Activated naive CD4-positive, alpha-beta T cell treated with anti-CD3 and anti-CD28 coated beads for 36 hours (primary cell): ENCODE measurements at regions of chr1 and their contacts with region 1.

Region 1: DNA sequence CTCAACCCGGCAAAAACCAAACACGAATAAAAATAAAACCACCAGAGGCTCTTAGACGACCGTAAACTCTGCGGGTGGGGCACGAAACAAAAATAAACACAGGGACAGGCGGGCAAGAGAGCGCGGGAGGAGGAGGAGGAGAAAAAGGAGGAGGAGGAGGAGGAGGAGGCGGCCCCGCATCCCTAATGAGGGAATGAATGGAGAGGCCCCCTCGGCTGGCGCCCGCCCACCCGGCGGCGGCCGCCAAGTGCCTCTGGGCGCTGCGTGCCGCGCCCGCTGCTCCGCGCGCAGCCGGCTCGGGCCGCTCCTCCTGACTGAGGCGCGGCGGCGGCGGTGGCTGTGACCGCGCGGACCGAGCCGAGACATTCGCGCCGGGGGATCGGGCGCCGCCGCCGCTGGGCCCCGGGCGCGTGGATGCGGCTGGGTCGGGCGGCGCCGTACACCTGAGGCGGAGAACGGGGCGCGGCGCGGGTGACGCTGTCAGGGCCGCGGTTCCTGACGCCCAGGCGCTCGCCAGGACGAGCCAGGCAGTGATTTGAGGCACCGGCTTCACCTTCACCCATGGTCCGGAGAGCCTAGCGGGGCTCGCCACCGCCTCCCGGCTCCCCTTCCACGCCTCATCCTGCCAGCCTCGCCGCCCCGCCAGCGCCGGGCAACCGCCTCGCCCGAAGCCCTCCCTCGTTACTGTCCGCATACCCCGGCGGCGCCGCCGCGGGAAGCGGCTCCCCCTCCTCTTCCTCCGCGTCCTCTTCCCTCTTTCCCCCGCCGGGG is at the start of gene MARK1:
- DNase-seq: peak; percentile 14
- H3K4me3 Mint-ChIP-seq: peak within 1 kb of the TSS; percentile 80
- H3K27ac Mint-ChIP-seq: no peak within 1 kb of the TSS
- H3K4me1 Mint-ChIP-seq: peaks cover 12% of the 10 kb centered on the region
- H3K27me3 Mint-ChIP-seq: peaks cover 58% of the 10 kb centered on the region
- total RNA-seq, gene MARK1: not detected

Region 2: DNA sequence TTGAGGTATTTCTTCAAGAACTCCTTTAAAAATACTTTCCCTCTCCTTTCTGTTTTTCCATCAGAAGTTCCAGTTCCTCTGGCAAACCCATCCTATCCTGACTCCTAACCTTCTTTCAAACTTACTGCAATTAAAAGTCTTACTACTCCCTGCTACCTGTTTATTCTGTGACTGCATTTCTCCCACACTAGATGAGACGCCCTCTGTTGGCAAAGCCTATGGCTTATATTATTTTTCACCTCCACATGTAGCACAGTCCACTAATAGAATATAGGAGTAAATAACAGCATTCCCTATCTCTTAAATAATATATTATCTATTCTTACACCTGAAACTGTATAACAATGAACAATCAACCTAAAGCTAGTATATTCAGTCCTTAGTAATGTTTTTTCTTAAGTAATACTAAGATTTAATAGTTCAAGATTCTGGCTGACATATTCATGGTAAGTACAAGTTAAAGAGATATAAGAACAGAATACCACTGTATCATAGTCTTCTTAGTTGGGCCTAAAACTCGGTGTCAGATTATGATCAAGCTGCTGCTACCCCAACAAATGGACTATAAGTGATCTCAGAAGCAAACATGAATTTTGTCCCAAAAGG is 310.6 kb before region 1 on chr1:
- CTCF ChIA-PET with region 1: no interaction called
- intact Hi-C with region 1: loop called (anchors 5 kb)
- DNase-seq: no peak
- H3K4me3 Mint-ChIP-seq: no peak overlapping the region
- H3K27ac Mint-ChIP-seq: no peak overlapping the region
- H3K4me1 Mint-ChIP-seq: peaks cover 28% of the 10 kb centered on the region
- H3K27me3 Mint-ChIP-seq: no peaks in the 10 kb centered on the region

Region 3: DNA sequence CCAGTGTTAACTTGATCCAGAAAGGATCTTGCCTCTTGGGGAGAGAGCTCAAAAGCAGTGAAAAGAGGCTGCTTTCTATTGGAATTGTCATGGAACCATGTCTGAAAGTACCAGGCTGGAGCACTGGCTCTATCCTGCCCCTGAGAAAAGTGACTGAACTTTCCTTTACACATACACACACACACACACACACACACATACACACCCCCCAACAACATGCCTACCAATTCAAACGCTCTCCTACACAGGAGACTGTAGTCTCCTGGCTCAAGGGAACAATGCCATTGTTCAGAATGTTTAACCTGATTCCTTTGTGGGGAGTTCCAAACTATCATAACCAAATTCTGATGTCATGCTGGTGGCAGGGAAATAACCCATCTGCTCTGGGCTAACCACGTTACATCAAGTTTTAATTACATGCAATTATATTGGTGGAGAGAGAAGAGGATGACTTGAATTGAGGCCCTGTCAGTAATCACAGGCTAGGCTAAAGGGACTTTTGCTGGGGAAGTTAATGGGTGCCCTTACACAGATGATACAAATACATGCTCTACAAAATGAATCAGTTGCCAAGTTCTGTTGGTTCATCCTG is 1266.1 kb after region 1 on chr1:
- CTCF ChIA-PET with region 1: no interaction called
- intact Hi-C with region 1: no loop called
- DNase-seq: peak; percentile 73
- H3K4me3 Mint-ChIP-seq: peak overlapping the region; percentile 17
- H3K27ac Mint-ChIP-seq: peak overlapping the region; percentile 88
- H3K4me1 Mint-ChIP-seq: peaks cover 40% of the 10 kb centered on the region
- H3K27me3 Mint-ChIP-seq: no peaks in the 10 kb centered on the region